Activated T-helper 1 cell treated with anti-CD3 and anti-CD28 coated beads, Interleukin-12 subunit alpha, Interleukin-12 subunit beta, Interleukin-2, Interleukin-4 antibody, amounts not matched to agents 30 ng/mL and 10 ng/mL and 1 ng/mL, durations not matched to agents 14 hours and 24 hours and 36 hours (primary cell): ENCODE measurements at regions of chr3 and their contacts with region 1.

Region 1: GRCh38 chr3:186930641-186931531 is 560 bp downstream of the ST6GAL1 start:
- DNase-seq: peak; percentile 54
- H3K4me3 Mint-ChIP-seq: peak overlapping the region; percentile 87
- H3K27ac Mint-ChIP-seq: peak overlapping the region; percentile 90
- H3K4me1 Mint-ChIP-seq: peaks cover 49% of the 10 kb centered on the region
- H3K27me3 Mint-ChIP-seq: no peaks in the 10 kb centered on the region

Region 2: GRCh38 chr3:185912929-185913901 is 1017.7 kb before region 1 on chr3:
- intact Hi-C with region 1: no loop called
- DNase-seq: no peak
- H3K4me3 Mint-ChIP-seq: no peak overlapping the region
- H3K27ac Mint-ChIP-seq: no peak overlapping the region
- H3K4me1 Mint-ChIP-seq: peaks cover 6% of the 10 kb centered on the region
- H3K27me3 Mint-ChIP-seq: no peaks in the 10 kb centered on the region

Region 3: DNA sequence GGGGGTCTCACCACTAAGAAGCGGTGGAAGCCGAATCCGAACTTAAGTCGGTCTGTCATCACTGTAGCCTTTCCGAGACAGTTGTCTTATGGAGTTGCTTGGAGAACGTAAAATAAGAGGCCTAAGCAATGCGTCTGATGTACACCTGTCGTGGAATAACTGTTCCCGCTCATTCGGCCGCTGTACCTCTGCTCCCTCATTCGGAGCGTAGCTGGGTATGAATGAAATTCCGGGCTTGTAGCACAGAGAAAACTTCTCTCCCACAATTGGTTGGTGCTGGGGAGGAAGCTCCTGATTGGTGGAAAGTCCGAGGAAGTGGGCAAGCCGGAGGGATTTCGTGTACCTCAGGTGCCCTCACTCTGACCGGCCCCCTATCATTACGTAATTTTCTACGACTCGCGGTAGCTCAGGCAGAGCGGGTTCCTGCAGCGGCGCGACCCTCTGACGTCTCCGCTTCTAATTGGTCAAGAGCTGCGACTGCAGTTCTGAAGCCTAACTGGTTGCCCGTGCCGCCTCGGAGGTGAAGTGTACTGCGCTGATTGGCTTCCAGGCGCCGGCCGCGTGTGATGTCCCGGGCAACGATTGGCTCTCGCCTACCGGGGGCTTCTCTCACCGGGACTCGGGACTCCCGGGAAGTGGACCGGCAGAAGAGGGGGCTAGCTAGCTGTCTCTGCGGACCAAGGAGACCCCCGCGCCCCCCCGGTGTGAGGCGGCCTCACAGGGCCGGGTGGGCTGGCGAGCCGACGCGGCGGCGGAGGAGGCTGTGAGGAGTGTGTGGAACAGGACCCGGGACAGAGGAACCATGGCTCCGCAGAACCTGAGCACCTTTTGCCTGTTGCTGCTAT is 360.6 kb before region 1 on chr3 and contains the start of gene DNAJB11:
- intact Hi-C with region 1: loop called (anchors 5 kb)
- DNase-seq: peak; percentile 98
- H3K4me3 Mint-ChIP-seq: peak within 1 kb of the TSS; percentile 91
- H3K27ac Mint-ChIP-seq: peak within 1 kb of the TSS; percentile 99
- H3K4me1 Mint-ChIP-seq: peaks cover 59% of the 10 kb centered on the region
- H3K27me3 Mint-ChIP-seq: no peaks in the 10 kb centered on the region
- total RNA-seq, gene DNAJB11: 71.0 and 75.8 TPM in 2 replicates

Region 4: GRCh38 chr3:186849374-186849975 is 81.4 kb before region 1 on chr3:
- intact Hi-C with region 1: loop called (anchors 1 kb)
- DNase-seq: no peak
- H3K4me3 Mint-ChIP-seq: no peak overlapping the region
- H3K27ac Mint-ChIP-seq: no peak overlapping the region
- H3K4me1 Mint-ChIP-seq: peaks cover 26% of the 10 kb centered on the region
- H3K27me3 Mint-ChIP-seq: peaks cover 13% of the 10 kb centered on the region

Region 5: GRCh38 chr3:186953011-186953487 is 22.2 kb after region 1 on chr3:
- intact Hi-C with region 1: loop called (anchors 1 kb)
- DNase-seq: peak; percentile 16
- H3K4me3 Mint-ChIP-seq: peak overlapping the region; percentile 59
- H3K27ac Mint-ChIP-seq: peak overlapping the region; percentile 89
- H3K4me1 Mint-ChIP-seq: peaks cover 83% of the 10 kb centered on the region
- H3K27me3 Mint-ChIP-seq: no peaks in the 10 kb centered on the region

Region 6: GRCh38 chr3:187041362-187042307 is 110.7 kb after region 1 on chr3:
- intact Hi-C with region 1: loop called (anchors 1 kb)
- DNase-seq: peak; percentile 57
- H3K4me3 Mint-ChIP-seq: peak overlapping the region; percentile 82
- H3K27ac Mint-ChIP-seq: peak overlapping the region; percentile 95
- H3K4me1 Mint-ChIP-seq: peaks cover 85% of the 10 kb centered on the region
- H3K27me3 Mint-ChIP-seq: no peaks in the 10 kb centered on the region

Region 7: DNA sequence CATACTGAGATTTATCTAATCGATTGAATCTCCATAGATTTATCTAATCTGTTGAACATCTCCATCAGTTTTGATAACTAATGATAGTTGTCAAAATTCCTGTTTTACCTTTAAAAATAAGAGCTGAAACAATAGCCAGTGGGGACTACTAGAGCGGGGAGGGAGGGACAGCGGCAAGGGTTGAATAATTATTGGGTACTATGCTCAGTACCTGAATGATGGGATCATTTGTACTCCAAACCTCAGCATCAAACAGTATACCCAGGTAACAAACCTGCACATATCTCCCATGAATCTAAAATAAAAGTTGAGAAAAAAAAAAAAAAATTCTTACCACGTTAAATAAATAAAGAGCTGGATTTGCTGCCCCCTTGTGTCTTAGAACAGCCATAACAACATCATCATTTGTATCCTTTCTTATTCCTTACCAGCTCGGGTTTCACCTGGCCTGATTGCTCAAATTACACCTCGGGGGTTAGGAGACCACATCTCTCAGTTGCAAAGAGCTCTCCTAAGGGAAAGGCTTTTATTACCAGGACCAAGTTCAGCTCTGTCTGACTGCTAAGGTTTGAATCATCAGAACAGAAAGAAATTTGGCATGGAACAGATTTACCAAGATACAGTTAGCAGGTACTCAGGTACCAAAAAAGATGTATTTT is 234.1 kb after region 1 on chr3:
- intact Hi-C with region 1: loop called (anchors 5 kb)
- DNase-seq: peak; percentile 8
- H3K4me3 Mint-ChIP-seq: no peak overlapping the region
- H3K27ac Mint-ChIP-seq: no peak overlapping the region
- H3K4me1 Mint-ChIP-seq: no peaks in the 10 kb centered on the region
- H3K27me3 Mint-ChIP-seq: peaks cover 25% of the 10 kb centered on the region

Region 8: GRCh38 chr3:187822402-187822801 is 891.5 kb after region 1 on chr3:
- intact Hi-C with region 1: no loop called
- DNase-seq: no peak
- H3K4me3 Mint-ChIP-seq: no peak overlapping the region
- H3K27ac Mint-ChIP-seq: peak overlapping the region; percentile 89
- H3K4me1 Mint-ChIP-seq: peaks cover 36% of the 10 kb centered on the region
- H3K27me3 Mint-ChIP-seq: no peaks in the 10 kb centered on the region